Caco-2 (cell line): ENCODE measurements at regions of chr16 and their contacts with region 1.

Region 1: GRCh38 chr16:61946019-61946418 is 90.2 kb downstream of the CDH8 start:
- DNase-seq: no peak
- H3K4me3 ChIP-seq: no peak overlapping the region
- H3K4me3 Mint-ChIP-seq: no peak overlapping the region
- H3K27ac Mint-ChIP-seq: no peak overlapping the region
- H3K4me1 ChIP-seq: peaks cover 24% of the 10 kb centered on the region
- H3K4me1 Mint-ChIP-seq: peaks cover 26% of the 10 kb centered on the region
- H3K27me3 ChIP-seq: no peaks in the 10 kb centered on the region
- H3K27me3 Mint-ChIP-seq: no peaks in the 10 kb centered on the region
- CTCF ChIP-seq: peak in 1 of 2 experiments; percentile 25

Region 2: DNA sequence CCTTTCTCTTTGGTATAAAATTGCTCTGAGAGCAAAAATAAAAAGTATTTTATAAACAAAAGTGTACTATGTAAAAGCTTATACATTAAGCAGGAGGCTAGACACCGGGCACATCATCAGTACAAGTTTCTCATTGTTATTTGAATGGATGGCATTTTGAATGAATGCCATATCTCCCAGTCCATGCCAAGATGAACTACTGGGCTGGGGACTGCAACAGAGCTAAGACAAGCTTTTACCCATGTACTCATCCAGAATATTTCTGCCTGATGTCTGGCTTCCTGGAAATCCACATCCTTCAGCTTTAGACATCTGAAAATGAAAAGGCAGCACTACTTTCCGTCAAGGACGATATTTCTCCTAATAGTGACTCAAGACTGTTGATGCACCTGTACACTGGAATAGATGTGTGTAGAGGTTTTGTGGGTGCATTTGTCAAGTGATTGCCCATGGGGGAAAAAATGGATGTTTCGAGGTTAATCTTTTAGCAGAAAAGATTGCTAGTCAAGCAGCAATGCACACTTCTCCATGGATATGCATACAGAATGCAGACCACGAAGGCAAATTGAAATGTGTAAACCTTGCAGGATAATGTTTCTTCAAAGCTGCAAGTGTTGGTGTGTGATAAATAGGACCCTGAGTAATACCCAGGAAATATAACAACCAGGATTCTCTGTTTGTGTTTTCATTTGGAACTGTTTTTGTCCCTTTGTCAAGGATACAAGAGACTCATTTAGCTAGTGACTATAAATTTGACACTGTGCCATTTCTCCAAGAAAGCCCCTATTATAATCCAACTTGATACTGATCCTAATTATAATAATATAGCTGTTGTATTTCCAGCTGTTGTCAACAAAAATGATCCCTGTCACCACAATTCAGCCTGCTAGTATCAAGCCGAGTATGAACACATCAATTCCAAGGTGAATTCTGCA is 83.5 kb before region 1 on chr16:
- CTCF ChIA-PET with region 1: no interaction called
- POLR2A ChIA-PET with region 1: interaction called, 11 read pairs
- intact Hi-C with region 1: no loop called
- DNase-seq: no peak
- H3K4me3 ChIP-seq: no peak overlapping the region
- H3K4me3 Mint-ChIP-seq: no peak overlapping the region
- H3K27ac Mint-ChIP-seq: no peak overlapping the region
- H3K4me1 ChIP-seq: 0 out of 2 replicates have a peak, but pooled peaks cover 3% of the 10 kb centered on the region
- H3K4me1 Mint-ChIP-seq: no peaks in the 10 kb centered on the region
- H3K27me3 ChIP-seq: no peaks in the 10 kb centered on the region
- H3K27me3 Mint-ChIP-seq: no peaks in the 10 kb centered on the region
- CTCF ChIP-seq: no peak

Region 3: GRCh38 chr16:61998460-61998859 is 52.4 kb after region 1 on chr16:
- CTCF ChIA-PET with region 1: no interaction called
- POLR2A ChIA-PET with region 1: no interaction called
- intact Hi-C with region 1: loop called (anchors 5 kb)
- DNase-seq: no peak
- H3K4me3 ChIP-seq: no peak overlapping the region
- H3K4me3 Mint-ChIP-seq: no peak overlapping the region
- H3K27ac Mint-ChIP-seq: no peak overlapping the region
- H3K4me1 ChIP-seq: no peaks in the 10 kb centered on the region
- H3K4me1 Mint-ChIP-seq: no peaks in the 10 kb centered on the region
- H3K27me3 ChIP-seq: no peaks in the 10 kb centered on the region
- H3K27me3 Mint-ChIP-seq: peaks cover 2% of the 10 kb centered on the region
- CTCF ChIP-seq: no peak